Panc1 (cell line): ENCODE measurements at regions of chr17 and their contacts with region 1.

Region 1: GRCh38 chr17:2137342-2138098 is 82.6 kb downstream of the HIC1 start:
- DNase-seq: no peak
- ATAC-seq: no peak
- H3K4me3 ChIP-seq: no peak overlapping the region
- H3K27ac ChIP-seq: no peak overlapping the region
- H3K4me1 ChIP-seq: no peaks in the 10 kb centered on the region
- H3K27me3 ChIP-seq: no peaks in the 10 kb centered on the region
- CTCF ChIP-seq: no peak

Region 2: GRCh38 chr17:1967213-1967612 is 170.3 kb before region 1 on chr17:
- CTCF ChIA-PET with region 1: no interaction called
- POLR2A ChIA-PET with region 1: no interaction called
- in situ Hi-C with region 1: no loop called
- intact Hi-C with region 1: no loop called
- DNase-seq: no peak
- ATAC-seq: no peak
- H3K4me3 ChIP-seq: no peak overlapping the region
- H3K27ac ChIP-seq: no peak overlapping the region
- H3K4me1 ChIP-seq: no peaks in the 10 kb centered on the region; the same call in 1 of the 2 replicates
- H3K27me3 ChIP-seq: no peaks in the 10 kb centered on the region
- CTCF ChIP-seq: no peak

Region 3: GRCh38 chr17:2736956-2737355 is 599.4 kb after region 1 on chr17:
- CTCF ChIA-PET with region 1: no interaction called
- POLR2A ChIA-PET with region 1: no interaction called
- in situ Hi-C with region 1: no loop called
- intact Hi-C with region 1: no loop called
- DNase-seq: no peak
- ATAC-seq: no peak
- H3K4me3 ChIP-seq: no peak overlapping the region
- H3K27ac ChIP-seq: no peak overlapping the region
- H3K4me1 ChIP-seq: no peaks in the 10 kb centered on the region
- H3K27me3 ChIP-seq: no peaks in the 10 kb centered on the region
- CTCF ChIP-seq: no peak

Region 4: DNA sequence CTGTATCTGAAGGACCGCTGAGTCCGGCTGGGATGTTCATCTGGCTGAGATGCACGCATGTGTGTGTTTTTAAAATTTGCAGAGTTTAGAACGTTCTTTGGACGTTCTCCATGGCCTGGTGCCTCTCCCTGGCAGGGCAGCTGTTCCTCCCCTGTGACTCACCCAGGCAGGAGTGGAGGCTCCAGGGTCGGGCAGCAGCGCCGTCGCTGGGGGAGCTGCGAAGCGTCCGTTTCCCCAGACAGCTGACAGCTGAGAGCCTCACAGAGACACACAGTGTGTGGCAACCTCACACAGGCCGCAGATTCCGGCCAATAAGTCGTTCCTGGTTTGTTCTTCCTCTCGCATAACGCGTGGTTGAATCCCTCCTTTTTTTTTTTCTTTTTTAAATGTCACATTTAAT is 845.3 kb after region 1 on chr17:
- CTCF ChIA-PET with region 1: no interaction called
- POLR2A ChIA-PET with region 1: interaction called, 15 read pairs
- in situ Hi-C with region 1: no loop called
- intact Hi-C with region 1: no loop called
- DNase-seq: no peak
- ATAC-seq: no peak
- H3K4me3 ChIP-seq: no peak overlapping the region
- H3K27ac ChIP-seq: no peak overlapping the region
- H3K4me1 ChIP-seq: no peaks in the 10 kb centered on the region
- H3K27me3 ChIP-seq: no peaks in the 10 kb centered on the region
- CTCF ChIP-seq: no peak